ENCODE measurements at regions of chr6 and their contacts with region 1.

Region 1: DNA sequence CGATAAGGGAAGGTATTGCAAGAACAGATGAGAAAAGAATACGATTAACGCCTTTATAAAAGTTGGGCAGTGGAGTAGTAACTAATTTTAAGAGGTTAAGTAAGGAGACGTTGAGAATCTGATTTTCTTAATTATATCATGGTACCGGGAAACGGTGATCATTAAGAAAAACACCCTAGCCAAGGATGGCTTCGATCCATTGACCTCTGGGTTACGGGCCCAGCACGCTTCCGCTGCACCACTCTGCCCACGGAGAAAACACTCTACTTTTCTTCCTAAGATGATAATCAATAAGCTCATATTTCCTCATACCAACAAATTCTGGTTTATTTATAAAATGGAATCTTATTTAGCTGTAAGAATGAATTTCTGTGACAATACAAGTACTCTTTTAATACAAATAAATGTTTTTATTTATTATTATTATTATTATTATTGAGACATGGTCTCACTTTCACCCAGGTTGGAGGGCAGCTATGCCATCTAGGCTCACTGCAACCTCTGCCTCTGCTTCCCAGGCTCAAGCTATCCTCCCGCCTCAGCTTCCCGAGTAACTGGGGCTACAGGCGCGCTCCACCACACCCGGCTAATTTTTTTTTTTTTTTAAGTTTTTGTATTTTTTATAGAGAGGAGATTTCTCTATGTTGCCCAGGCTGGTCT is 8.3 kb downstream of the POM121L2 start:
- DNase-seq: no peak
- ATAC-seq: peak; percentile 62
- H3K4me3 ChIP-seq: no peak overlapping the region
- H3K27ac ChIP-seq: no peak overlapping the region
- H3K4me1 ChIP-seq: no peaks in the 10 kb centered on the region
- H3K27me3 ChIP-seq: no peaks in the 10 kb centered on the region; the same call in 1 of the 2 replicates
- CTCF ChIP-seq: no peak
- POLR2A ChIP-seq: no peak
- RAD21 ChIP-seq: no peak

Region 2: DNA sequence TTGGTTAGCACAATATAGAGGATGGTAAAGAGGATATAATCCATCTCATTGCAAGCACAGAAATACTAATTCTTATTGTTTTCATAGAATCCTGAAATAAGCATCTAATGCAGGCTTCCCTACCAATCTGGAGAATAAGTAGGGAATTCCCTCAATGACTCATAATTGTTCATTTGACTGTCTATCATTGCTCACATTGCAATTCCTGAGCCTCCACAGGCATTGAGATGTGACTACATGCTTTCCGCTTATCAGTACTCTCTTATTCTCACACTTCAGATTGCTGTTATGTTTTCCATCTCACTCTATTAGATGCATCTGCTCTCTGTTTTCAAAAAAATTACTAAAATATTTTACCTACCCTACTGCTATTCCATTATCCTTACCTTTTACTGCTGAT is 272.4 kb before region 1 on chr6:
- CTCF ChIA-PET with region 1: no interaction called
- POLR2A ChIA-PET with region 1: no interaction called
- dilution Hi-C with region 1: no loop called
- in situ Hi-C with region 1: no loop called
- intact Hi-C with region 1: no loop called
- DNase-seq: peak; percentile 20
- ATAC-seq: no peak
- H3K4me3 ChIP-seq: no peak overlapping the region
- H3K27ac ChIP-seq: no peak overlapping the region
- H3K4me1 ChIP-seq: no peaks in the 10 kb centered on the region
- H3K27me3 ChIP-seq: no peaks in the 10 kb centered on the region
- CTCF ChIP-seq: no peak
- POLR2A ChIP-seq: no peak
- RAD21 ChIP-seq: no peak

Region 3: DNA sequence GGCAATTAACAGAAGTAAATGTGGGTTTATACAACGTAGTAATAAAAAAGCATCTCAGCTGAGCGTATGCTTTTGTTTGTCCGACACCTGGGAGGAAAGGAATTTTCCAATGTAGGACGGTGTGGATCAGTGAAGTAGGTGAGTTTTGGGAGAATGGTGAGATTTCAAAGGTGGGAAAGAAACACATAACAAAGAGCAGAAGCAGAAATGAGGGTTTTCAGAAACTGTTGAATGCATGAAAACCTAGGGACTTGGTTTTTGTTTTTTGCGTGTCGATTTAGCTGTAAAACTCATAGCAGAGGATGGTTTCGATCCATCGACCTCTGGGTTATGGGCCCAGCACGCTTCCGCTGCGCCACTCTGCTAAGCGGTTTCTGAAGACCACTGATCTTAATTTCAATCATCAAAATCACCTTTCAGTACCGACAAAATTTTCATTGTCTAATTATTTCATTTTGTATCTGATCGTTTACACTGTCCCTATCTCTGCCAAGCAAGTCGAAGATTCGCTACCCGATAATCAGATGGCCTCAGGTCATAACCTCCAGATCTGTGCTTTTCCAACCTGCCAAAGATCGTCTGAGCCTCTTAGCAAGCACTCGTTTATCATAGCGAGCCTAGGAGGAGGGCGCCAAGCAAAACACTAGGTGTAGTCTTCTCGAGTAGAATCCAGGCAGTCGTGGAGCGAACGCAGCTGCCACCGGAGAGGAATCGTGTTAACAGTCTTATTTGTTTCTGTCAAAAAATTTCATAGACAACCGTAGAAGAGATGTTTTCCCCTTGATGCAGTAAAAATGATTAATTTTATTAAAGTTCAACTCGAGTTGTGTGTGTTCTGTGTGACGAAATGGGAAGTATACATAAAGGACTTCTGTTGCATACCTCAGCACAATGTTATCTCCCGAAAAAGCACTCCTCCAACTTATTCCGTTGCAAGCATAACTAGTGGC is 29.2 kb after region 1 on chr6:
- CTCF ChIA-PET with region 1: interaction called, 3 read pairs
- POLR2A ChIA-PET with region 1: no interaction called
- dilution Hi-C with region 1: no loop called
- in situ Hi-C with region 1: no loop called
- intact Hi-C with region 1: loop called (anchors 1 kb)
- DNase-seq: peak; percentile 71
- ATAC-seq: peak; percentile 87
- H3K4me3 ChIP-seq: peak overlapping the region; percentile 68
- H3K27ac ChIP-seq: no peak overlapping the region
- H3K4me1 ChIP-seq: no peaks in the 10 kb centered on the region
- H3K27me3 ChIP-seq: no peaks in the 10 kb centered on the region
- CTCF ChIP-seq: no peak
- POLR2A ChIP-seq: no peak
- RAD21 ChIP-seq: no peak

Measured in IMR-90 (cell line).